ENCODE measurements at regions of chr3 and their contacts with region 1.

Region 1: DNA sequence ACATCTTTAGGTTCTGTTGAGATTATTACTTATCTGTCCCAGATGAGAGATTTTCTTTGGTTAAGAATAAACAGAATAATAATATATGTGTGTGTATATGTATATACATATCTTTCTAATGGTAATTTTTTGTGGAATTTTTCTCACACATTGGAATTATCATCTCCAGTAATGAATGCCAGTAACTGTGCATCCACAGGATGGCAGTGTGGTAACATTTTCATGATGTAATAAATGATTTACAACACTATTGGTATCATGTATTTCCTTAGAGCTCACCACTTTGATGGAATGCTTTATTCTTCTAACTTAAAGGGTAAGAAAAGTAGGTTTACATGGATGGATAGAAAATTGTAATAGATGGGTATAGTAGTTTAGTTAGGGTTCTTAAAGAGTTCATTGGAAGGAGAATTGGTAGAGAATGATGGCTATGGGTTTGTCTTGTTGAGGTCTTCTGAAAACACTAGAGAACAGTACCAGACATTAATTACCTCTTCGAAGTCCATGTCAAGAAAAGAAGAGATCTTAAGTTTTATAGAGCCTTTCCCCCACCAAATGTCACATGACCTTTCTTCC is 78.1 kb downstream of the STT3B start:
- DNase-seq: no peak

Region 2: DNA sequence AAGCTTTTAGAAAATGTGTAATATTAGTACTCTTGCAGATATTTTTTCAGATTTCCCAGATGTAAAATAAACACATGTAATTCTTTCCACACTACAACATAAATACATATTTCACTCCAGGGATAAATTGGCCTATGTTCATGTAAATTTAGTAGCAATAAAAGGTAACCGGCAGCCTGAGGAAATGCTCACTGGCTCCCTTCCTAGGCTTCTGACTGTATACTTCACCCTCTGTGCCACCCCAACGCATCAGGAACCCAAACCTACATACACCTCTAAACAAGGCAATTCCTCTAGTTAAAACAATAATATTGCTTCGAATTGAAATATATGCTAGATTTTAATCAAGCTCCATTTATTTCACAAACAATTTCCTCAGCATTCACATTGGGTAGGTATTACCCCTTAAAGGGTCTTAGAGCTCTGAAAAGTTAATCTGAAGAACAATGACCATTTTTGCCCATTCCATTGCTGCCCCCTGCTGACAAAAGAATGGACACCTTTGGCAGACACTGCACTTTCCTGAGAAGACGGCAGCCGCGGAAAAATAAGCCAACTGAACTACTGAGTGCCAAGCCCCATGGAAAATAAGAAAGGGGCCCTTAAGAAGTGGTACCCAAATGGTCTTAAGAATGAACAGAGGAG is 157.8 kb after region 1 on chr3:
- intact Hi-C with region 1: loop called (anchors 2 kb)
- DNase-seq: no peak

Region 3: GRCh38 chr3:32120471-32120870 is 509.7 kb after region 1 on chr3:
- intact Hi-C with region 1: loop called (anchors 10 kb)
- DNase-seq: no peak